Activated T-helper 1 cell treated with anti-CD3 and anti-CD28 coated beads, Interleukin-12 subunit alpha, Interleukin-12 subunit beta, Interleukin-2, Interleukin-4 antibody, amounts not matched to agents 30 ng/mL and 10 ng/mL and 1 ng/mL, durations not matched to agents 14 hours and 24 hours and 36 hours (primary cell): ENCODE measurements at regions of chr2 and their contacts with region 1.

Region 1: GRCh38 chr2:58046585-58047372 is at the start of gene VRK2:
- DNase-seq: peak; percentile 83
- H3K4me3 Mint-ChIP-seq: peak within 1 kb of the TSS; percentile 88
- H3K27ac Mint-ChIP-seq: peak within 1 kb of the TSS; percentile 94
- H3K4me1 Mint-ChIP-seq: peaks cover 44% of the 10 kb centered on the region
- H3K27me3 Mint-ChIP-seq: no peaks in the 10 kb centered on the region
- total RNA-seq, gene VRK2: 25.3 and 25.6 TPM in 2 replicates

Region 2: DNA sequence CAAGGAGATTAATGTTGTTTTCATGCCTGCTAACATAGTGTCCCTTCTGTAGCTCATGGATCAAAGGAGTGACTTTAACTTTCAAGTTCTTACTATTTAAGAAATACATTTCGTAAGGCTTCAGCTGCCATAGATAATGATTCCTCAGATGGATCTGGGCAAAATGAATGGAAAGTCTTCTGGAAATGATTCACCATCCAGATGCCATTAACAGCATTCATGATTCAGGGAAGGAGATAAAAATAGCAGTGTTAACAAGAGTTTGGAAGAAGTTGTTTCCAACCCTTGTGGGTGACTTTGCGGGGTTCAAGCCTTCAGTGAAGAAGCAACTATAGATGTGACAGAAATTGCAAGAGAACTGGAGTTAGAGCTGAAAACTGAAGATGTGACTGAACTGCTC is 16.9 kb after region 1 on chr2:
- intact Hi-C with region 1: loop called (anchors 2 kb)
- DNase-seq: no peak
- H3K4me3 Mint-ChIP-seq: no peak overlapping the region
- H3K27ac Mint-ChIP-seq: peak overlapping the region; percentile 10
- H3K4me1 Mint-ChIP-seq: peaks cover 15% of the 10 kb centered on the region
- H3K27me3 Mint-ChIP-seq: no peaks in the 10 kb centered on the region

Region 3: GRCh38 chr2:58146707-58147106 is 99.9 kb after region 1 on chr2:
- intact Hi-C with region 1: loop called (anchors 2 kb)
- DNase-seq: no peak
- H3K4me3 Mint-ChIP-seq: no peak overlapping the region
- H3K27ac Mint-ChIP-seq: no peak overlapping the region
- H3K4me1 Mint-ChIP-seq: no peaks in the 10 kb centered on the region
- H3K27me3 Mint-ChIP-seq: no peaks in the 10 kb centered on the region

Region 4: DNA sequence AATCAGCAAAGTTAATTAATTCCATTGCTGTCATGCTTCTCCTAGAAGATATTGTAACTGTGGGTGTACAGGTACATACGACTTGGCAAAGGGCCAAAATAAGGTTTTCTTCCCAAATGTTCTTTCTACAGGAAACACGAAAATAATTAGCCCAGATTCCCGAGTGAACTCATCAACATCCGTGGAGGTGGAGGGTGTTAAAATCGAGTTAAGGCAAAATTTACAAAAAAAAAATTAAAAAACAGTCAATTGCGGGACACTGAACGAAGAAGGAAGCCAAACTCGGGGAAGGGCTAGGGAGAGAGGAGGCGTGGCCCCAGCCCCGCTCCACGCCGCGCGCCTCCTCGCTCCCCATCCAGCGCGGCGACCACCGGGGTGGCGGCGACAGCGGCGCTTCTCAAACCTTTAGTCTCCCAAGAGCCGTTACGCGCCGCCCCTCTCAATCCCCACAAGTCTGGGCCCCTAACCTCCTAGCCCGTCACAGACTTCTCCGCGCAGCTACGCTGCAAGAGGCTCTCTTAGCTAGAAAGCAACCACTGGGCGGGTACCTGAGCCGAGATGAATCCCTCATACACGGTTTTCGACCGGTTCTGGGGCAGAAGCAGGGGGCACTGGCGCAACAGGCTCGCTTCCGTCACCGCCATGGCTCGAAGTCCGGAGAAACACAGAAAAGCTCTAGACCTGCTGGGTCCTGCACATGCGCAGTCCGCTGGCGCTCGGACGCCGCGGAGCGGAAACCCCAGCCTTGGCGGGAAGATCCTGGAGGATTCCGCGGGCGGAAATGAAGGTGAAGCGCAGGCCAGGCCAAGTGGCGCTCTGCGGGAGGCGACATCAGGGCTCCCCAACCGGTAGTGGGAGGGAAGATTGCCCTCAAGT is 194.1 kb after region 1 on chr2 and contains the start of gene FANCL:
- intact Hi-C with region 1: loop called (anchors 1 kb)
- DNase-seq: peak; percentile 67
- H3K4me3 Mint-ChIP-seq: peak within 1 kb of the TSS; percentile 90
- H3K27ac Mint-ChIP-seq: peak within 1 kb of the TSS; percentile 83
- H3K4me1 Mint-ChIP-seq: peaks cover 35% of the 10 kb centered on the region
- H3K27me3 Mint-ChIP-seq: peaks cover 12% of the 10 kb centered on the region
- total RNA-seq, gene FANCL: 21.4 and 22.9 TPM in 2 replicates

Region 5: GRCh38 chr2:58350484-58350883 is 303.7 kb after region 1 on chr2:
- intact Hi-C with region 1: loop called (anchors 10 kb)
- DNase-seq: no peak
- H3K4me3 Mint-ChIP-seq: no peak overlapping the region
- H3K27ac Mint-ChIP-seq: no peak overlapping the region
- H3K4me1 Mint-ChIP-seq: peaks cover 8% of the 10 kb centered on the region
- H3K27me3 Mint-ChIP-seq: peaks cover 38% of the 10 kb centered on the region